Caco-2 (cell line): ENCODE measurements at regions of chr9 and their contacts with region 1.

Region 1: DNA sequence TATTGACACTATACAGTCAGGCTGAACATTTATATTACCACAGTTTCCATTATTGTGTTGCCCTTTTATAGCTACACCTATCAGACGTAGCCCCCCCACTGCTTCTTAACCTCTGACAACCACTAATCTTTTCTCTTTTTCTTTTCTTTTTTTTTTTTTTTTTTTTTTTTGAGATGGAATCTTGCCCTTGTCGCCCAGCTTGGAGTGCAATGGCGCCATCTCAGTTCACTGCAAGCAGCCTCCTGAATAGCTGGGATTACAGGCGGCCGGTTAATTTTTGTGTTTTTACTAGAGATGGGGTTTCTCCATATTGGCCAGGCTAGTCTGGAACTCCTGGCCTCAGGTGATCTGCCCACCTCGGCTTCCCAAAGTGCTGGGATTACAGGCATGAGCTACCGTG is 75.4 kb downstream of the UHRF2 start:
- DNase-seq: peak in 1 of 2 experiments; percentile 15
- H3K4me3 ChIP-seq: no peak overlapping the region
- H3K4me3 Mint-ChIP-seq: no peak overlapping the region
- H3K27ac Mint-ChIP-seq: no peak overlapping the region
- H3K4me1 ChIP-seq: no peaks in the 10 kb centered on the region
- H3K4me1 Mint-ChIP-seq: peaks cover 9% of the 10 kb centered on the region
- H3K27me3 ChIP-seq: no peaks in the 10 kb centered on the region
- H3K27me3 Mint-ChIP-seq: no peaks in the 10 kb centered on the region
- CTCF ChIP-seq: no peak

Region 2: GRCh38 chr9:6412487-6413364 is 75.7 kb before region 1 on chr9 and contains the start of gene UHRF2:
- CTCF ChIA-PET with region 1: interaction called, 7 read pairs
- POLR2A ChIA-PET with region 1: interaction called, 3 read pairs
- intact Hi-C with region 1: loop called (anchors 10 kb)
- DNase-seq: peak; percentile 94 to 97
- H3K4me3 ChIP-seq: peak within 1 kb of the TSS; percentile 87
- H3K4me3 Mint-ChIP-seq: peak within 1 kb of the TSS; percentile 90
- H3K27ac Mint-ChIP-seq: no peak within 1 kb of the TSS
- H3K4me1 ChIP-seq: peaks cover 8% of the 10 kb centered on the region; the same call in 1 of the 2 replicates
- H3K4me1 Mint-ChIP-seq: no peaks in the 10 kb centered on the region
- H3K27me3 ChIP-seq: no peaks in the 10 kb centered on the region
- H3K27me3 Mint-ChIP-seq: no peaks in the 10 kb centered on the region
- CTCF ChIP-seq: no peak
- total RNA-seq, gene UHRF2: 38.1 and 46.5 TPM in 2 replicates